Left lung (tissue), 14 donors: ENCODE measurements at regions of chr22 and their contacts with region 1.

Region 1: GRCh38 chr22:32985899-32986765 is 72.0 kb downstream of the SYN3 start:
- DNase-seq: peak in 3 of 4 donors; percentile 51 to 90 (median 85)
- ATAC-seq: peak; percentile 100
- H3K4me3 ChIP-seq: no peak overlapping the region
- H3K27ac ChIP-seq: peak overlapping the region in 1 of 2 donors; percentile 31
- H3K4me1 ChIP-seq: peaks cover 6 to 7% of the 10 kb centered on the region in 2 donors
- H3K27me3 ChIP-seq: no peaks in the 10 kb centered on the region
- CTCF ChIP-seq: peak; percentile 86 to 88

Region 2: DNA sequence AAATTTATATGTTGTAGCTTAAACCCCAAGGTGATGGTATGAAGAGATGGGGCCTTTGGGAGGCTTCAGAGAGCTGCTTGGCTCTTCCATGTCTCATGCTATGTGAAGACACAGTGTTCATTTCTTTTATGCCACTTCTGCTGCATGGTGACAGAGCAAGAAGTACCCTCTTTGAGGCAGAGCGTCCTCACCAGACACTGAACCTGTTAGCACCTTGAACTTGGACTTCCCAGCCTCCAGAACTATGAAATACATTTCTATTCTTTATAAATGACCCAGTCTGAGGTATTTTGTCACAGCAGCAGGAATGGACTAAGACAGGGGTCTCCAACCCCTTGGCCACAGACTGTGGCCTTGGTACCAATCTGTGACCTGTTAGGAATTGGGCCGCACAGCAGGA is 331.1 kb before region 1 on chr22:
- intact Hi-C with region 1: loop called in 1 of 2 experiments (anchors 5 kb)
- DNase-seq: no peak
- ATAC-seq: no peak
- H3K4me3 ChIP-seq: no peak overlapping the region
- H3K27ac ChIP-seq: no peak overlapping the region
- H3K4me1 ChIP-seq: no peaks in the 10 kb centered on the region
- H3K27me3 ChIP-seq: no peaks in the 10 kb centered on the region
- CTCF ChIP-seq: no peak

Region 3: GRCh38 chr22:33028234-33028633 is 42.1 kb after region 1 on chr22:
- intact Hi-C with region 1: no loop called
- DNase-seq: no peak
- ATAC-seq: no peak
- H3K4me3 ChIP-seq: no peak overlapping the region
- H3K27ac ChIP-seq: no peak overlapping the region
- H3K4me1 ChIP-seq: no peaks in the 10 kb centered on the region
- H3K27me3 ChIP-seq: peaks cover 0 to 16% of the 10 kb centered on the region in 2 donors
- CTCF ChIP-seq: no peak